ENCODE measurements at regions of chr22 and their contacts with region 1.

Region 1: GRCh38 chr22:38681784-38682335 is at the start of gene TOMM22:
- DNase-seq: peak; percentile 74 to 88 (median 83)
- ATAC-seq: peak; percentile 98
- H3K4me3 ChIP-seq: peak within 1 kb of the TSS; percentile 85
- H3K4me3 Mint-ChIP-seq: peak within 1 kb of the TSS; percentile 93 to 100 (median 99)
- H3K27ac ChIP-seq: peak within 1 kb of the TSS; percentile 87
- H3K27ac Mint-ChIP-seq: peak within 1 kb of the TSS; percentile 89 to 99 (median 98)
- H3K4me1 ChIP-seq: peaks cover 5 to 11% of the 10 kb centered on the region in 2 donors
- H3K4me1 Mint-ChIP-seq: peaks cover 12 to 28% (median 24%) of the 10 kb centered on the region in 7 donors
- H3K27me3 ChIP-seq: no peaks in the 10 kb centered on the region
- H3K27me3 Mint-ChIP-seq: no peaks in the 10 kb centered on the region
- total RNA-seq, gene TOMM22: 45.0 to 92.4 (median 50.6) TPM

Region 2: DNA sequence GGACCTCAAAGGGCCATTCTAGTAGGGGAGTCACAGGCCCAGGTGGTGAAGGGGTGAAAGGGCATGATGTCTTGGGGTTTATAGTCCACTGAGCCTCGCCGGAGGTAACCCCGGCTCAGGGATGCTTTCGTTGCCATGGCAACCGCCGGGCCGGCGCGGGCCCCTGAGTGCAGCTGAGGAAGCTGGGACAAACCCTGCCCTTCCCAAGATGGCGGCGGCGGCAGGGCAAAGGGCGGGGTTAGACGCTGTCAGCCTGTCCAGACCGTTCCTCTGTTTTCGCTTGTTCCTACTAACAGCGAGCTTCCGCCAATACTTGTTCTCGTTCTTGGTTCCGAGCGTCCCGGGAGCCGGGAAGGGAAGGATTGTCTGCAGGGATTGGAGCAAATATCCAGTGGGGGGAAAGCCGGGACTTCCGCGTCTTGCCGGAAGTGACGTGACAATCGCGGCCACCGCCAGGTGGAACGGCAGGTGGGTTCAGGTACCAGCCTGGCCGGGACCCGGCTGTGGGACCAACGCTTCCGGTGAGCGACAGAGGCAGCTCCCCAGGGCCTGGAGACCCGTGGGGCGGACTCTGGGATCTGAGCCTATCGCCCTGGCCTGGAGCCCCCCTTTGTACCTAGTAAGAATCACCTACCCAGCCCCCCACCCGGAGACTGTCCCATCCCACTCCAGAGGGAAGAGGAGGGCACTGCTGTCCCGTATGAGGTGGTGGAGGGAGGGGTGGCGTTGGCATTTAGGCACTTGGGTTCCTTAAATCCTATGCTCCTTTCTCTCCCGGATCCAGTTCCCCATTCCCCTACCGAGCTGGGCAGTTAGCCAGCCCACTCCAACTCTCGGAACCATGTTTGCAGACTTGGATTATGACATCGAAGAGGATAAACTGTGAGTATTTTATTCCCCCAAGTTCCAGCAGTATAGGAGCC is 624.6 kb before region 1 on chr22 and contains the start of gene PICK1:
- CTCF ChIA-PET with region 1: no interaction called
- POLR2A ChIA-PET with region 1: interaction called, 4 read pairs
- intact Hi-C with region 1: loop called in 1 of 2 experiments (anchors 2 kb)
- DNase-seq: peak; percentile 68 to 84 (median 81)
- ATAC-seq: peak; percentile 86
- H3K4me3 ChIP-seq: peak within 1 kb of the TSS; percentile 80
- H3K4me3 Mint-ChIP-seq: peak within 1 kb of the TSS; percentile 80 to 97 (median 96)
- H3K27ac ChIP-seq: peak within 1 kb of the TSS; percentile 87
- H3K27ac Mint-ChIP-seq: peak within 1 kb of the TSS; percentile 94 to 99 (median 98)
- H3K4me1 ChIP-seq: peaks cover 12 to 15% of the 10 kb centered on the region in 2 donors
- H3K4me1 Mint-ChIP-seq: peaks cover 0 to 26% (median 21%) of the 10 kb centered on the region in 7 donors
- H3K27me3 ChIP-seq: no peaks in the 10 kb centered on the region
- H3K27me3 Mint-ChIP-seq: peaks cover 0 to 16% (median 0%) of the 10 kb centered on the region in 5 donors
- total RNA-seq, gene PICK1: 10.0 to 29.3 (median 26.5) TPM

Region 3: DNA sequence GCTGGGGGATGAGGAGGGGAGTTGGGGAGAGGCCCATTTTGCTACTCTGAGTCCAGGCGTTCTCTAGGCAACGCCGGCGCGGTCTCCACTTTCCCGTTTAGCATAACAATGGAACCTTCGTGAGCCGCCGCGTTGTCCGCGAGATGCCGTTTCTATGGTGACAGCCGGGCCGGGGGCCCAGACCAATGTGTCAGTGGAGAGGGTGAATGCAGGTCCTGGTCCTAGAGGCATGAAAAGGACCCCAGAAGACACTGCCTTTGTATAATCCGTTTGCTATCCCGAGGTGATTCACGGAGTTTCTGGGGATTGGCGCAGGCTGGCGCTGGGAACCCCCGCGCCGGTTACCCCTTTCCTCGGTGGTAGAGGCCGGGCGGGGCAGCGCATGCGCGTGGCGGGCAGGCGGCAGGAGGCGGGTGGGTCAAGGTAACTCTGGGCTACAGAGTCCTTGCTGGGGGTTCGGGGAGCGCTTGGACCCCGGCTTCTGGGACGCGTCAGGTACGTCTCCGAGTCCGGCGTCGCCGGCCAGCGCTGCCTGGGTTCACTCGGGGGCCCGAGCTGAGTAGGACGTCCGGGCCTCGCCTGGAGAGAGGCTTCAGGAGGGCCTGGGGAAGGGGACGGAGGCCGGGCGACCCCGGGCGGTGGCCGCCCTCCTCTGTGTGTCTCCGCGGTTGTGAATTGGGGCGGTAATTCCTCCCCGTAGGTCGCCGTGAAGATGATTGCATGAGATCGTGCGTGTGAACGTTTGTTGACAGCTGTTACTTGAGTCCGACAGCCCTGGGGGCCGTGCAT is 25.4 kb before region 1 on chr22 and contains the starts of genes CBY1 and FAM227A:
- CTCF ChIA-PET with region 1: no interaction called
- POLR2A ChIA-PET with region 1: interaction called, 14 read pairs
- intact Hi-C with region 1: loop called (anchors 1 kb)
- DNase-seq: peak; percentile 79 to 94 (median 85)
- ATAC-seq: peak; percentile 92
- H3K4me3 ChIP-seq: peak within 1 kb of the TSS; percentile 98
- H3K4me3 Mint-ChIP-seq: peak within 1 kb of the TSS; percentile 94 to 96 (median 96)
- H3K27ac ChIP-seq: peak within 1 kb of the TSS; percentile 93
- H3K27ac Mint-ChIP-seq: peak within 1 kb of the TSS; percentile 92 to 99 (median 98)
- H3K4me1 ChIP-seq: peaks cover 4 to 9% of the 10 kb centered on the region in 2 donors
- H3K4me1 Mint-ChIP-seq: peaks cover 4 to 23% (median 18%) of the 10 kb centered on the region in 7 donors
- H3K27me3 ChIP-seq: no peaks in the 10 kb centered on the region
- H3K27me3 Mint-ChIP-seq: no peaks in the 10 kb centered on the region
- total RNA-seq, gene CBY1: 12.2 to 39.9 (median 15.2) TPM
- total RNA-seq, gene FAM227A: 0.05 to 1.0 (median 0.30) TPM in 4 of 5 experiments, not detected in the other

Region 4: GRCh38 chr22:38820020-38820419 is 138.2 kb after region 1 on chr22:
- CTCF ChIA-PET with region 1: no interaction called
- POLR2A ChIA-PET with region 1: no interaction called
- intact Hi-C with region 1: no loop called
- DNase-seq: no peak
- ATAC-seq: no peak
- H3K4me3 ChIP-seq: no peak overlapping the region
- H3K4me3 Mint-ChIP-seq: no peak overlapping the region
- H3K27ac ChIP-seq: no peak overlapping the region
- H3K27ac Mint-ChIP-seq: no peak overlapping the region
- H3K4me1 ChIP-seq: no peaks in the 10 kb centered on the region
- H3K4me1 Mint-ChIP-seq: peaks cover 0 to 2% (median 0%) of the 10 kb centered on the region in 7 donors
- H3K27me3 ChIP-seq: no peaks in the 10 kb centered on the region
- H3K27me3 Mint-ChIP-seq: no peaks in the 10 kb centered on the region